Colonic mucosa (tissue), 4 donors: ENCODE measurements at regions of chr1 and their contacts with region 1.

Region 1: GRCh38 chr1:178542560-178543356 is 29.8 kb downstream of the TEX35 start:
- DNase-seq: peak; percentile 94
- H3K4me3 ChIP-seq: peak overlapping the region; percentile 73
- H3K27ac ChIP-seq: peak overlapping the region; percentile 83
- H3K4me1 ChIP-seq: peaks cover 2% of the 10 kb centered on the region
- H3K27me3 ChIP-seq: no peaks in the 10 kb centered on the region
- CTCF ChIP-seq: peak; percentile 100

Region 2: DNA sequence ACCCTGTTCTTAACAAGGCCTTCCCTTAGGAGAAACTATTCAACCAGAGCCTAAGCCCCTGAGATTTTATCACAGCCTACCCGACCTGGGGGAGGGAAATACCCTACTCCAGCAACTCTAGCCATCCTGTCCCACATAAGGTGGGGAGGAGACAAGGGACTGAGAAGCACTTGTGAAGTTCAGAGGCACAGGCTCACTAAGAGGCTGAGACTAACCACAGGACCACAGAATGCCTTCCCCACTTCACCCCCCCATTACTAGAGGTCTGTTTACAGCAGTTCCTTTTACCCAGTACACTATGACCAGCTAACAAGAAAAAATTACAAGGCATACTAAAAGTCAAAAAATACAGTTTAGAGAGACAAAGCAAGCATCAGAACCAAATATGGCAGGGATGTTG is 57.0 kb after region 1 on chr1:
- intact Hi-C with region 1: no loop called
- DNase-seq: no peak
- H3K4me3 ChIP-seq: no peak overlapping the region
- H3K27ac ChIP-seq: no peak overlapping the region
- H3K4me1 ChIP-seq: no peaks in the 10 kb centered on the region
- H3K27me3 ChIP-seq: no peaks in the 10 kb centered on the region
- CTCF ChIP-seq: no peak

Region 3: GRCh38 chr1:178664278-178664677 is 121.5 kb after region 1 on chr1:
- intact Hi-C with region 1: no loop called
- DNase-seq: no peak
- H3K4me3 ChIP-seq: no peak overlapping the region
- H3K27ac ChIP-seq: no peak overlapping the region
- H3K4me1 ChIP-seq: no peaks in the 10 kb centered on the region
- H3K27me3 ChIP-seq: no peaks in the 10 kb centered on the region
- CTCF ChIP-seq: no peak

Region 4: GRCh38 chr1:178749581-178750166 is 206.9 kb after region 1 on chr1:
- intact Hi-C with region 1: loop called (anchors 2 kb)
- DNase-seq: no peak
- H3K4me3 ChIP-seq: no peak overlapping the region
- H3K27ac ChIP-seq: no peak overlapping the region
- H3K4me1 ChIP-seq: no peaks in the 10 kb centered on the region
- H3K27me3 ChIP-seq: no peaks in the 10 kb centered on the region
- CTCF ChIP-seq: no peak

Region 5: GRCh38 chr1:179002552-179003345 is 460.0 kb after region 1 on chr1:
- intact Hi-C with region 1: loop called (anchors 2 kb)
- DNase-seq: peak; percentile 87
- H3K4me3 ChIP-seq: no peak overlapping the region
- H3K27ac ChIP-seq: peak overlapping the region; percentile 19
- H3K4me1 ChIP-seq: no peaks in the 10 kb centered on the region
- H3K27me3 ChIP-seq: no peaks in the 10 kb centered on the region
- CTCF ChIP-seq: peak; percentile 97